PC-3 (cell line): ENCODE measurements at regions of chr3 and their contacts with region 1.

Region 1: GRCh38 chr3:50950591-50950990 is 275.9 kb downstream of the DOCK3 start:
- DNase-seq: no peak
- ATAC-seq: no peak
- H3K4me3 ChIP-seq: no peak overlapping the region
- H3K27ac ChIP-seq: no peak overlapping the region
- H3K4me1 ChIP-seq: no peaks in the 10 kb centered on the region
- H3K27me3 ChIP-seq: peaks cover 50% of the 10 kb centered on the region
- CTCF ChIP-seq: no peak

Region 2: GRCh38 chr3:50830451-50830850 is 120.1 kb before region 1 on chr3:
- CTCF ChIA-PET with region 1: no interaction called
- POLR2A ChIA-PET with region 1: no interaction called
- intact Hi-C with region 1: no loop called
- DNase-seq: no peak
- ATAC-seq: no peak
- H3K4me3 ChIP-seq: no peak overlapping the region
- H3K27ac ChIP-seq: no peak overlapping the region
- H3K4me1 ChIP-seq: no peaks in the 10 kb centered on the region
- H3K27me3 ChIP-seq: peaks cover 21% of the 10 kb centered on the region
- CTCF ChIP-seq: no peak

Region 3: DNA sequence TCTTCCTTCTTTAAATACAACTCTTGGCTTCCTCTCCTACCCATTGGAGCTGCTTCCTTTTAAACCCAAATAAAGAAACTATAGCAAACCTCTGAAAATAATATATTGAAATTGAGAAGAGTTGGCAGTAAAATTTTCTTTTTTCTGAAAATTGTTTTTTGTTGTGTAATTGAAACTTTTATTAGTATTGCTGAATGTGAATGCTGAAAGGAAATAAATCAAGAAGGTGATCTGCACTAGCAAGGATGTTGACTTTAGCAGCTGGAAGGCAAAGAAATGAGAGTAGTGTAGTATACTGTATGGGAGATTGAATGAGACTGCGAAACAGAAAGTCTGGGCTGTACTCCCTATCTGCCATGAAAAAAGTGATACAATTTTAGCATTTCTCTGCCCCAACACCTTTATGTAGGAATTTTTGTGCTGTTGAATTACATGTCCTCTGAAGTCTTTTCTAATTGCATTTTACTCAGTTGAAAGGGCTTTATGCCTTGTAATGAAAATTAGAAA is 109.6 kb before region 1 on chr3:
- CTCF ChIA-PET with region 1: interaction called, 10 read pairs
- POLR2A ChIA-PET with region 1: no interaction called
- intact Hi-C with region 1: no loop called
- DNase-seq: no peak
- ATAC-seq: no peak
- H3K4me3 ChIP-seq: no peak overlapping the region
- H3K27ac ChIP-seq: no peak overlapping the region
- H3K4me1 ChIP-seq: no peaks in the 10 kb centered on the region
- H3K27me3 ChIP-seq: peaks cover 24% of the 10 kb centered on the region
- CTCF ChIP-seq: no peak

Region 4: DNA sequence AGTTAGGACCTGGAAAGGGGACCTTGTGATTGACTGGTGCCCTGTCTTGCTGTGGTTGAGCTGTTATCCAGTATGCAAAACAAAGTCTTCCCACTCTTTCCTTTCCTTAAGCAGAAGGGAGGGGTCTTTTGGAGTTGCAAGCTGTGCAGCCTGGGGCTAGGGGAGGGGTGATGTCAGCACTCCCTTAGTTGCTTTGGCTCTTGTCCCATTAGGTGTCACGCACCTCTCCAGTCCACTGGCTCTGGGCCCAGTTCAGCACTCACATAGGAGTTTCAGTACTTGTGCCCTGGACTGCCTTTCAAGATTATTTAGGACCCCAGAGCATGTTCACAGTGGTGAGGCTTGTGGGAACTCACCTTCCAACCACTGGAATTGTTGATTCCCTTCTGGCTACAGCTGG is 37.3 kb before region 1 on chr3:
- CTCF ChIA-PET with region 1: no interaction called
- POLR2A ChIA-PET with region 1: no interaction called
- intact Hi-C with region 1: no loop called
- DNase-seq: peak; percentile 42
- ATAC-seq: no peak
- H3K4me3 ChIP-seq: no peak overlapping the region
- H3K27ac ChIP-seq: no peak overlapping the region
- H3K4me1 ChIP-seq: no peaks in the 10 kb centered on the region
- H3K27me3 ChIP-seq: peaks cover 17% of the 10 kb centered on the region; the same call in 1 of the 2 replicates
- CTCF ChIP-seq: no peak

Region 5: GRCh38 chr3:52339612-52340011 is 1389.0 kb after region 1 on chr3:
- CTCF ChIA-PET with region 1: no interaction called
- POLR2A ChIA-PET with region 1: no interaction called
- intact Hi-C with region 1: no loop called
- DNase-seq: peak; percentile 80
- ATAC-seq: peak; percentile 56
- H3K4me3 ChIP-seq: no peak overlapping the region
- H3K27ac ChIP-seq: no peak overlapping the region
- H3K4me1 ChIP-seq: peaks cover 2% of the 10 kb centered on the region
- H3K27me3 ChIP-seq: no peaks in the 10 kb centered on the region
- CTCF ChIP-seq: peak; percentile 90